Activated CD4-positive, alpha-beta T cell treated with anti-CD3 and anti-CD28 coated beads, Interleukin-2, amount 10 ng/mL, durations not matched to agents 24 days and 14 days (primary cell): ENCODE measurements at regions of chr12 and their contacts with region 1.

Region 1: GRCh38 chr12:21940549-21941505 is at the start of gene ABCC9:
- DNase-seq: peak; percentile 65
- H3K4me3 Mint-ChIP-seq: peak within 1 kb of the TSS; percentile 61
- H3K27ac Mint-ChIP-seq: peak within 1 kb of the TSS; percentile 36
- H3K4me1 Mint-ChIP-seq: peaks cover 9% of the 10 kb centered on the region
- H3K27me3 Mint-ChIP-seq: peaks cover 52% of the 10 kb centered on the region
- total RNA-seq, gene ABCC9: 0.02 TPM in 1 of 2 replicates, not detected in the other

Region 2: GRCh38 chr12:21773263-21773741 is 167.5 kb before region 1 on chr12:
- intact Hi-C with region 1: loop called (anchors 10 kb)
- DNase-seq: no peak
- H3K4me3 Mint-ChIP-seq: no peak overlapping the region
- H3K27ac Mint-ChIP-seq: no peak overlapping the region
- H3K4me1 Mint-ChIP-seq: peaks cover 4% of the 10 kb centered on the region
- H3K27me3 Mint-ChIP-seq: peaks cover 60% of the 10 kb centered on the region

Region 3: DNA sequence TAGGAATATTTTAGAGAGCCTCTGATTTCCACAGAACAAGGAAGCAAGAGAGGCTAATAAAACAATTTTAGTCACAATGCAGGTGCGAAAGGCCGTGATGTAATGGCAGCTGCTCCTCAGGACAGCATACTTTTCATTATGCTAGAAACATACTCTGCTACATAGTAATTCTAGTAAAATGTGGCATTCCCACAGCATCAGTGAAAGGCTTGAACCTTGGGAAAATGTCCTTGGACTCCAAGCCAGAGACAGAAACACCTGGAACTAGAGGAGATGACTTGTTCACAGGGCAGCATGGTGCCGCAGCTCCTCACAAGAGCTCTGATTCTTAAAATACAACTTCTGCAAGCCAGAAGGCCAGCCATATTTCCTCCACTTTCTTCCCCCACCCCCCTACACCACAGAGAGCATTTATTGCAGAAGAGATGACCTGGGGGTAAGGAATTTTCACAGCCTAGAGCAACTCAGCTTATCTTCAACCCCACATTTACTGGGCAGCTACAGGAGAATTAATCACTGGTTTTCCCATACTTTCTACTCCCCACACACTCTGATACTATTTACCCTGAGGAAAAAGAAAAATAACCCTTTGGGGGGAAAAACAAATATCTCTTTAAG is 15.4 kb before region 1 on chr12:
- intact Hi-C with region 1: no loop called
- DNase-seq: no peak
- H3K4me3 Mint-ChIP-seq: no peak overlapping the region
- H3K27ac Mint-ChIP-seq: no peak overlapping the region
- H3K4me1 Mint-ChIP-seq: no peaks in the 10 kb centered on the region
- H3K27me3 Mint-ChIP-seq: no peaks in the 10 kb centered on the region